ENCODE measurements at regions of chr10 and their contacts with region 1.

Region 1: DNA sequence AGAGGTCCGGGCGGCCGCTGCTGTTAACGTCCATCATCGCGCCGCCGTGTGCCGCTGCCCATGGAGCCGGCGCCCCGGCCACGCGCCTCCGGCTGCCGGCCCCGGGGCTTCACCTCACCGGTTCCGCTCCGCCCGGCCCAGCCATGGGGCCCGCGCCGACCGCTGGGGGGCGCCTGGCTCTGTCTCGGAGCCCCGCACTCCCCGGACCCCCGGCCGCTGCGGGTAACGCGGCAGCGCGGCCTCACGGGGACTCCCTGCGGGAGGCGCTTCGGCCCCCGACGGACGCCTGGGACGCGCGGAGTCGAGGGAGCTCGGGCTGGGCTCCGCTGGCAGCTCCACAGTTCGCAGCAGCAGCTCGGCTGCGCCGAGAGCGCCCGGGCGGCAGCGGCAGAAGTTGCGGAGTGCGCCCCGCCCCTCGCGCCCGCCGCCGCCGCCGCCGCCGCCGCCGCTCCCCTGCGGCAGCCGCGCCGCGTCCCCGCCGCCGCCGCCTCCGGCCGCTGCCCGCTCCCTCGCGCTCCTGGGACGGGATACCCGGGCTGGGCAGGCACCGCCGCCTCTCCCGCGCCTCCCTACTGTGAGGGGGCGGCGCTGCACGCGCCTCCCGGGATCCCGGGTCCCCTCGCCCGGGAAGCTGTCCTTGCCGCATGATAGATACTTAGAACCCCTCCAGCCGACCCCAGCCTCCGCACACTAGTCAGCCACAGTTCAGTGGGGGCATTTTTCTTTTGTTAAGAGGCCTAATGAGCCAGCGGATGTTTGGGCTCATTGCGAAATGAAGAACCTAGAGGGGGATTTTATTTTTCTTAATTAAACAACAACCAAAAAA is at the start of gene HTR7:
- DNase-seq: peak; percentile 33
- ATAC-seq: peak; percentile 84
- H3K4me3 ChIP-seq: peak within 1 kb of the TSS; percentile 80
- H3K27ac ChIP-seq: peak within 1 kb of the TSS; percentile 44
- H3K4me1 ChIP-seq: no peaks in the 10 kb centered on the region
- H3K27me3 ChIP-seq: peaks cover 17% of the 10 kb centered on the region
- CTCF ChIP-seq: peak; percentile 49
- POLR2A ChIP-seq: no peak
- RAD21 ChIP-seq: no peak
- total RNA-seq, gene HTR7: 0.56 and 0.72 TPM in 2 replicates

Region 2: GRCh38 chr10:89591111-89591795 is 1266.6 kb before region 1 on chr10:
- CTCF ChIA-PET with region 1: no interaction called
- POLR2A ChIA-PET with region 1: no interaction called
- dilution Hi-C with region 1: no loop called
- in situ Hi-C with region 1: no loop called
- intact Hi-C with region 1: no loop called
- DNase-seq: peak; percentile 52
- ATAC-seq: peak; percentile 51; the same call in 1 of the 2 replicates
- H3K4me3 ChIP-seq: no peak overlapping the region
- H3K27ac ChIP-seq: peak overlapping the region; percentile 23
- H3K4me1 ChIP-seq: peaks cover 10% of the 10 kb centered on the region
- H3K27me3 ChIP-seq: no peaks in the 10 kb centered on the region
- CTCF ChIP-seq: no peak
- POLR2A ChIP-seq: no peak
- RAD21 ChIP-seq: no peak

Region 3: DNA sequence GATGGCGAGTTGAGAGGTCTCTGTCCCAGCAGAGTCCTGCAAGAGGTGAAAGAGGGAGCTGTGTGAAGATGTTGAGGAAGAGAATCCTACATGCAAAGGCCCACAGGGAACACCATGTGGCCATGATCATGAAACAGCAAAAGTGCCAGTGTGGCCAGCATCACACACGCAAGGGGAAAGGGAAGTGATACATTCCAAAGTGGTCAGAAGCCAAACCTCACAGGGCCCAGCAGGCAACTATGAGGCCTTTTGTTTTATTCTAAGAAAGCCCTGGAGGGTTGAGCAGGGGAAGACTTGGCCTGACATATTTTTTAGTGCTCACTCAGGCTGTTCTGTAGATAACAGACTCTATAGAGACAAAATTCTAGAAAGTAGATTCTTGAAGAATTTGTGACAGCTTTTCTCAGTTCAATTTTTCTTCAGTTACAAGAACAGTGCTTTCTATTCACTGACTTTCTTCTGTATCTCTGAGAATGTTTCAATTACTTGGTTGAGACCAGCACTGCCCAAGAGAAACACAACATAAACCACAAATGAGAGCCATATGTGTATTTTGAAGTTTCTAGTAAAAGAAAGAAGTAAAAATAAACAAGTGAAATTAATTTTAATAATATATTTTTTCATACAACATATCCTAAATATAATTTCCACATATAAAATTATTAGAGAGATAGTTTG is 82.4 kb before region 1 on chr10:
- CTCF ChIA-PET with region 1: interaction called, 4 read pairs
- POLR2A ChIA-PET with region 1: interaction called, 15 read pairs
- dilution Hi-C with region 1: no loop called
- in situ Hi-C with region 1: no loop called
- intact Hi-C with region 1: no loop called
- DNase-seq: no peak
- ATAC-seq: peak; percentile 37; the same call in 1 of the 2 replicates
- H3K4me3 ChIP-seq: no peak overlapping the region
- H3K27ac ChIP-seq: no peak overlapping the region
- H3K4me1 ChIP-seq: no peaks in the 10 kb centered on the region
- H3K27me3 ChIP-seq: 0 out of 2 replicates have a peak, but pooled peaks cover 2% of the 10 kb centered on the region
- CTCF ChIP-seq: no peak
- POLR2A ChIP-seq: no peak
- RAD21 ChIP-seq: no peak

Measured in IMR-90 (cell line).